Dendritic cell treated with granulocyte-macrophage colony-stimulating factor and Interleukin-4, amounts not matched to agents 40 ng/mL and 50 ng/mL, for 4 days (primary cell): ENCODE measurements at regions of chr1 and their contacts with region 1.

Region 1: DNA sequence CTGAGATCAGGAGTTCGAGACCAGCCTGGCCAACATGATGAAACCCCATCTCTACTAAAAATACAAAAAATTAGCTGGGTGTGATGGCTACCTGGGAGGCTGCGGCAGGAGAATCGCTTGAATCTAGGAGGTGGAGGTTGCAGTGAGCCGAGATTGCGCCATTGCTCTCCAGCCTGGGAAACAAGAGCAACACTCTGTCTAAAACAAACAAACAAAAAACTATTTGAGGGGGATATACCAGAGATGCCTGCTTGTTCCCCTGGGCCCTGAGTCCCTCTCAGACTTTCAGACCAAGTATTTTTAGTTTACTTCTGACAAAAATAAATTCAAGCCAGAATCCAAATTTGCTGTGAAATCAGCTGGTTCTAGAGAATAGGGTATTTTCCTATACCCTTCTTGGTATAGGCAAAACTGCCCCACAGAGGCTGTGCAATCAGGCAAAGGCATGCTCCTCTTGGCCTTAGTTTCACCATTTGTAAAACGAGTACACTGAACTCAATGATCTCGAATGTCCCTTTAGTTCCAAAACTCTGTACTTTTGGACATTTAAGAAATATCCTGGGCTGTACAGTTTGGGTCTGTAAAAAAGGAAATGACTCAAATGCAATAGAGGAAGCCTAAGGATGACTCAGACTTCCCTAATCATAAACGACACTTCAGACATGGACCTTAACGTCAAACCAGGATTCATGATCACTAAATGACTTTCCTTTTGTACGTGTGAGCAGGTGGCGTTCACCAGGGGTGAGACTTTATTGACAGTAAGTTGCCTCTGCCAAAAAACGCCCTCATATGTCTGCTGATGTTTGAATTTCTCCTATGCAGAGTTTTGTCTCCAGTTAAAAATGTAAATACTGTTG is 16.1 kb downstream of the ENSA start:
- H3K4me3 Mint-ChIP-seq: peak overlapping the region; percentile 63
- H3K27ac Mint-ChIP-seq: peak overlapping the region; percentile 94
- H3K4me1 Mint-ChIP-seq: peaks cover 67% of the 10 kb centered on the region
- H3K27me3 Mint-ChIP-seq: no peaks in the 10 kb centered on the region

Region 2: DNA sequence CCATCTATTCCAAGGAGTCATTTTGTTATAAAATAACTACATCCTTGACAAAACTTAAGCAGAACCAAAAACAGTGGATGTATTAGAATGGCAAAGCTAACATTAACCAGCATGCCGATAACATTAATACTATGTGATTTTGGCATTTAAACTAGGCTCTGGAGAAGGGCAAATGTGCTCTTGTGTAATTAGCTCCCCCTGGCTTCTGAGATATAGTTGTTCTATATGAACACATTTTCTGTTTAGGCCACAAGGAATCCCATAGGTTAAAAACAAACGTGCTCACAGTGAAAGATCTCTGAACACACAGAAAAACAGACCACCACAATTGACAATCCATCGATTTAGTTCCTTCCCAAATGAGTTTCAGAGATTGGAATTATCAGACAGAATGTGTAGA is 183.5 kb before region 1 on chr1:
- intact Hi-C with region 1: no loop called
- H3K4me3 Mint-ChIP-seq: no peak overlapping the region
- H3K27ac Mint-ChIP-seq: no peak overlapping the region
- H3K4me1 Mint-ChIP-seq: no peaks in the 10 kb centered on the region
- H3K27me3 Mint-ChIP-seq: no peaks in the 10 kb centered on the region

Region 3: DNA sequence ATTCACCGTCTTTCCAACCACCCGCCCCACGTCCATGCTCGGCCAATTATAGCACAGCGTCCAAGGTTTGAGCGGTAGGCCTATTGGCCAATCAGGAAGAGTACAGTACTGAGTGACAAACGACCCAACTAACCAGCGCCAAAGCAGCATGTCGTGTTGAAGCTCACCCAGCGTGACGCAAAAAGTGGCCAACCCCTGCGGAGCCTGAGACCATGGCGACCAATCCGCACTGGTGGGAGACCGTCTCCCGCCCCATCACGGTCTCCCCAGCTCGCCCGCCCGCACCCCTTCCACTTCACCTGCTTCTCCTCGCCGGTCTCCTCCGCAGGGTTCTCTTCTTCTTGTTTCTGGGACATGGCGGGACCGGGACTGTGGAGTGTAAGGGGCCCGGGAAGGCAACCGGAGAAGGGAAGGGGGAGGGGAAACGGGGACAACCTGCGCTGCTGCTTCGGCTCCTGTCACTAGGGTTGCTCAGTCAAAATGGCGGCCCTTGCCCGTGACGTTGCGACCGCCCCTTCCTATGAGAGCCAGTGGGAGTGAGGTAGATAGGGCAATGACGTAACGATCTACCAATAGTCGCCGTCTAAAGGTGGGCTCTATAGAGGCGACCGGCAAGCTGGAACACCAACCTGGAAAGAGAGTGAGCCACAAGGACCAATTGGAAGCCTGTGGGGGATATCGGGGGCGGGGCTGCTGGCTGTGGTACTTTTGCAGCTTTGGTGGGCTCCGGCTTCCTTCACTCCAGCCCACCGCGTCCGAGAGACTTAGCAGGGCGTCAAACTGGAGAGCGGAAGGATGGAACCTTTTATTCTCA is 16.0 kb after region 1 on chr1 and contains the start of gene ENSA:
- intact Hi-C with region 1: loop called (anchors 2 kb)
- H3K4me3 Mint-ChIP-seq: no peak within 1 kb of the TSS
- H3K27ac Mint-ChIP-seq: no peak within 1 kb of the TSS
- H3K4me1 Mint-ChIP-seq: peaks cover 27% of the 10 kb centered on the region
- H3K27me3 Mint-ChIP-seq: no peaks in the 10 kb centered on the region

Region 4: DNA sequence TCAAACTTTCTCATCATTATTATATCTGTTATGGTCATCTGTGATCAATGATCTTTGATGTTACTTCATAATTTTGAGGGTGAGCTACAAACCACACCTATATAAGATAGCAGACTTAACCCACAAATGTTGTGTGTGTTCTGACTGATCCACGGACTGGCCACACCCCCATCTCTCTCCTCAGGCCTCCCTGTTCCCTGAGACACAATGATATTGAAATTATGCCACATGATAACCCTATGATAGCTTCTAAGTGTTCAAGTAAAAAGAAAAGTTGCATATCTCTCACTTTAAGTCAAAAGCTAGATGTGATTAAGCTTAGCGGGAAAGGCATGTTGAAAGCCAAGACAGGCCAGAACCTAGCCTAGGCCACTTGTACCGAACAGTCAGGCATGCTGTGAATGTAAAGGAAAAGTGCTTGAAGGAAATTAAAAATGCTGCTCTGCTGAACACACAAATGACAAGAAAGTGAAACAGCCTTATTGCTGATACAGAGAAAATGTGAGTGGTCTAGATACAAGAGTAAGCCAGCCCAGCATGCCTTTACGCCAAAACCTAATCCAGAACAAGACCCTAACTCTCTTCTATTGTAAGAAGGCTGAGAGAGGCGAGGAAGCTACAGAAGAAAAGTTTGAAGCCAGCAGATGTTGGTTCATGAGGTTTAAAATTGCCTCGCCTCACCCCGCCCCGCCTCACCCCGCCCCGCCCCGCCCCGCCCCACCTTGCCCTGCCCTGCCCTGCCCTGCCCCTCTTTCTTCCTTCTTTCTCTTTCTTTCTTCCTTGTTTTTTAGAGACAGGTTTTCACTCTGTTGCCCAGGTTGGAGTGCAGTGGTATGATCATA is 135.8 kb after region 1 on chr1:
- intact Hi-C with region 1: no loop called
- H3K4me3 Mint-ChIP-seq: no peak overlapping the region
- H3K27ac Mint-ChIP-seq: no peak overlapping the region
- H3K4me1 Mint-ChIP-seq: peaks cover 17% of the 10 kb centered on the region
- H3K27me3 Mint-ChIP-seq: no peaks in the 10 kb centered on the region

Region 5: GRCh38 chr1:150955280-150955679 is 342.0 kb after region 1 on chr1:
- intact Hi-C with region 1: no loop called
- H3K4me3 Mint-ChIP-seq: no peak overlapping the region
- H3K27ac Mint-ChIP-seq: no peak overlapping the region
- H3K4me1 Mint-ChIP-seq: no peaks in the 10 kb centered on the region
- H3K27me3 Mint-ChIP-seq: no peaks in the 10 kb centered on the region